ENCODE measurements at regions of chr3 and their contacts with region 1.

Region 1: DNA sequence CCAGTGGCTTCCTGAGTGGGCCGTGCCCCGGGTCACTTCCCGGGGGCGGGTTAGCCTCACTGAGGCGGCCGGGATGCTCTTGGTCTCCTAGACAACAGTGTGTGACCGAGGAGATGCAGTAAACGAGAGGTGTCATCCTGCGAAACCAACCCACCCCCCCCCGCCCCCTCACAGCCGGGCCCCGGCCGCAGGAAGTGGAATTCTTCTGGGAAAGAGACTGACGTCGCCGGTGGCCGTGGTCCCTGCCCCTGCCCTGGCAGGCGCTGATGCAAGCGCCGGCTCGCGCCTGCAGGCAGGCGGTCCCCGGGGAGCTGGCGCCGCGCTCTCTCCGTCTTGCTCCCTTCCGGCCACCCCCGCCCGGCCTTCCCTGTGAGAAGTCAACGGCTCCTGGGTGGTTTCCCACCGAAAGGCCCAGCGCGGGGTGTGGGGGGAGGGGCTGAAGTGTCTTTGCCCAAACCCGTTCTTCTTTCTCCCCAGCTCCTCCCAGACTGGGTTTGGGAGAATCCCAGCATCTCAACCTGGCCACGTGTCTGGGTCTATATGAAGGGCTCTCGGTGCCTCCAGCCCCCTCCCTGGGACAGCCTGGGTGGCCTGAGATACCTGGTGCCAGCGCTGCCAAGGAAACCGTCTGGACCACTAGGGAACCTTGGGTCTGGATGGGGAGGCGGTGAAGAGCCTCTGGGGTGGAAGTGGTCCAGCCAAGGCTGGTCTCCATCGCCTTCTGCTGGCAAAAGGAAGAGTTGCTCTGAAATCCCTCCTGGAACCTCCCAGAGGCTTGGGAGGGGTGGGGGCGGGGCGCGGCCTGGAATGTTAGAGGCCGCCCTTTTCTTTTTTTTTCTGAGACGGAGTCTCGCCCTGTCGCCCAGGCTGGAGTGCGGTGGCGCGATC is 47.3 kb downstream of the BHLHE40 start:
- DNase-seq: peak; percentile 80
- H3K4me3 ChIP-seq: peak overlapping the region; percentile 61
- H3K27ac ChIP-seq: peak overlapping the region; percentile 87
- H3K27me3 ChIP-seq: no peaks in the 10 kb centered on the region
- CTCF ChIP-seq: peak; percentile 80

Region 2: GRCh38 chr3:4656059-4656458 is 370.5 kb before region 1 on chr3:
- CTCF ChIA-PET with region 1: interaction called, 11 read pairs
- POLR2A ChIA-PET with region 1: no interaction called
- DNase-seq: peak; percentile 44
- H3K4me3 ChIP-seq: no peak overlapping the region
- H3K27ac ChIP-seq: no peak overlapping the region
- H3K27me3 ChIP-seq: no peaks in the 10 kb centered on the region
- CTCF ChIP-seq: peak; percentile 98

Region 3: GRCh38 chr3:4720279-4721075 is 306.1 kb before region 1 on chr3:
- CTCF ChIA-PET with region 1: interaction called, 28 read pairs
- POLR2A ChIA-PET with region 1: no interaction called
- DNase-seq: no peak
- H3K4me3 ChIP-seq: no peak overlapping the region
- H3K27ac ChIP-seq: no peak overlapping the region
- H3K27me3 ChIP-seq: no peaks in the 10 kb centered on the region
- CTCF ChIP-seq: peak; percentile 25; the same call in 1 of the 2 replicates

Region 4: GRCh38 chr3:4978204-4978965 is 48.2 kb before region 1 on chr3:
- CTCF ChIA-PET with region 1: interaction called, 17 read pairs
- POLR2A ChIA-PET with region 1: interaction called, 20 read pairs
- DNase-seq: peak; percentile 92
- H3K4me3 ChIP-seq: peak overlapping the region; percentile 92
- H3K27ac ChIP-seq: peak overlapping the region; percentile 93
- H3K27me3 ChIP-seq: no peaks in the 10 kb centered on the region
- CTCF ChIP-seq: no peak

Region 5: GRCh38 chr3:4986782-4987537 is 39.6 kb before region 1 on chr3:
- CTCF ChIA-PET with region 1: interaction called, 15 read pairs
- POLR2A ChIA-PET with region 1: interaction called, 11 read pairs
- DNase-seq: peak; percentile 89
- H3K4me3 ChIP-seq: peak overlapping the region; percentile 48
- H3K27ac ChIP-seq: peak overlapping the region; percentile 87
- H3K27me3 ChIP-seq: no peaks in the 10 kb centered on the region
- CTCF ChIP-seq: 0 out of 2 replicates have a peak, but pooled peaks have one; percentile 3

Region 6: GRCh38 chr3:5357089-5357488 is 330.5 kb after region 1 on chr3:
- CTCF ChIA-PET with region 1: no interaction called
- POLR2A ChIA-PET with region 1: no interaction called
- DNase-seq: no peak
- H3K4me3 ChIP-seq: no peak overlapping the region
- H3K27ac ChIP-seq: no peak overlapping the region
- H3K27me3 ChIP-seq: no peaks in the 10 kb centered on the region
- CTCF ChIP-seq: no peak